ENCODE measurements at regions of chr21 and their contacts with region 1.

Region 1: GRCh38 chr21:31098576-31099005 is 60.3 kb upstream of the KRTAP19-8 start:
- DNase-seq: peak; percentile 78
- ATAC-seq: peak; percentile 82
- H3K4me3 Mint-ChIP-seq: no peak overlapping the region
- H3K27ac Mint-ChIP-seq: no peak overlapping the region
- H3K4me1 Mint-ChIP-seq: peaks cover 24% of the 10 kb centered on the region
- H3K27me3 Mint-ChIP-seq: peaks cover 8% of the 10 kb centered on the region

Region 2: GRCh38 chr21:31041295-31042079 is 57.1 kb before region 1 on chr21:
- CTCF ChIA-PET with region 1: no interaction called
- POLR2A ChIA-PET with region 1: no interaction called
- DNase-seq: no peak
- ATAC-seq: no peak
- H3K4me3 Mint-ChIP-seq: no peak overlapping the region
- H3K27ac Mint-ChIP-seq: no peak overlapping the region
- H3K4me1 Mint-ChIP-seq: no peaks in the 10 kb centered on the region
- H3K27me3 Mint-ChIP-seq: peaks cover 5% of the 10 kb centered on the region

Region 3: GRCh38 chr21:31088315-31088714 is 10.3 kb before region 1 on chr21:
- CTCF ChIA-PET with region 1: interaction called, 15 read pairs
- POLR2A ChIA-PET with region 1: no interaction called
- DNase-seq: no peak
- ATAC-seq: no peak
- H3K4me3 Mint-ChIP-seq: no peak overlapping the region
- H3K27ac Mint-ChIP-seq: no peak overlapping the region
- H3K4me1 Mint-ChIP-seq: peaks cover 11% of the 10 kb centered on the region
- H3K27me3 Mint-ChIP-seq: peaks cover 10% of the 10 kb centered on the region

Region 4: GRCh38 chr21:31173881-31174555 is 75.4 kb after region 1 on chr21:
- CTCF ChIA-PET with region 1: interaction called, 64 read pairs
- POLR2A ChIA-PET with region 1: no interaction called
- DNase-seq: no peak
- ATAC-seq: no peak
- H3K4me3 Mint-ChIP-seq: no peak overlapping the region
- H3K27ac Mint-ChIP-seq: no peak overlapping the region
- H3K4me1 Mint-ChIP-seq: peaks cover 24% of the 10 kb centered on the region
- H3K27me3 Mint-ChIP-seq: no peaks in the 10 kb centered on the region

Region 5: DNA sequence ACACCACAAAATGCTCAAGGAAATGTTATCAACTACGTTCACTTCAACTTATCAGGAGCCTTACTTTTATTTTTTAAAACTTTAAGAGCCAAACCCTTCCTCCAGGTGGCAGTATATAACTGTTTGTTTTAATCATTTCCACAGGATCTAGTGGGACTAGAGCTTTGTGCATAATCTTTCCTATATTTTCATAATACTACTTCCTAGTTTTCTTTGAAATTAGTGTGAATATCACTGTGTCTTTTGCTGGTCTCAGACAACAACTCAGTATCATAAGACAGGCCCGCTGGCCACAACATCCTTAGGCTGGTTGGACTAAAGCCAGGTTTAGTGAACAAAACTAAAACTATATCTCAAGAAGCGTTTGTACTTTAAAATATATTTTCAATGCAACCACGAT is 100.0 kb after region 1 on chr21:
- CTCF ChIA-PET with region 1: interaction called, 11 read pairs
- POLR2A ChIA-PET with region 1: no interaction called
- DNase-seq: no peak
- ATAC-seq: peak; percentile 57
- H3K4me3 Mint-ChIP-seq: no peak overlapping the region
- H3K27ac Mint-ChIP-seq: no peak overlapping the region
- H3K4me1 Mint-ChIP-seq: peaks cover 23% of the 10 kb centered on the region
- H3K27me3 Mint-ChIP-seq: no peaks in the 10 kb centered on the region

Region 6: GRCh38 chr21:31332525-31332924 is 233.9 kb after region 1 on chr21:
- CTCF ChIA-PET with region 1: no interaction called
- POLR2A ChIA-PET with region 1: no interaction called
- DNase-seq: no peak
- ATAC-seq: no peak
- H3K4me3 Mint-ChIP-seq: no peak overlapping the region
- H3K27ac Mint-ChIP-seq: no peak overlapping the region
- H3K4me1 Mint-ChIP-seq: peaks cover 41% of the 10 kb centered on the region
- H3K27me3 Mint-ChIP-seq: no peaks in the 10 kb centered on the region

Region 7: GRCh38 chr21:31604591-31605190 is 506.1 kb after region 1 on chr21:
- CTCF ChIA-PET with region 1: interaction called, 23 read pairs
- POLR2A ChIA-PET with region 1: interaction called, 3 read pairs
- DNase-seq: peak; percentile 81
- ATAC-seq: peak; percentile 87
- H3K4me3 Mint-ChIP-seq: no peak overlapping the region
- H3K27ac Mint-ChIP-seq: no peak overlapping the region
- H3K4me1 Mint-ChIP-seq: peaks cover 2% of the 10 kb centered on the region
- H3K27me3 Mint-ChIP-seq: peaks cover 3% of the 10 kb centered on the region

Measured in activated CD8-positive, alpha-beta T cell treated with anti-CD3 and anti-CD28 coated beads, Interleukin-2, amount 10 ng/mL, durations not matched to agents 7 days and 5 days (primary cell).